T-cell (primary cell): ENCODE measurements at regions of chr5 and their contacts with region 1.

Region 1: GRCh38 chr5:134493461-134494055 is 31.9 kb upstream of the JADE2 start:
- DNase-seq: no peak
- ATAC-seq: peak in 1 of 4 experiments; percentile 49
- H3K4me3 ChIP-seq: no peak overlapping the region
- H3K4me3 Mint-ChIP-seq: no peak overlapping the region
- H3K27ac ChIP-seq: no peak overlapping the region
- H3K27ac Mint-ChIP-seq: no peak overlapping the region
- H3K4me1 ChIP-seq: no peaks in the 10 kb centered on the region
- H3K4me1 Mint-ChIP-seq: peaks cover 0 to 6% (median 0%) of the 10 kb centered on the region in 3 donors
- H3K27me3 ChIP-seq: peaks cover 0 to 3% of the 10 kb centered on the region in 2 experiments
- H3K27me3 Mint-ChIP-seq: no peaks in the 10 kb centered on the region

Region 2: DNA sequence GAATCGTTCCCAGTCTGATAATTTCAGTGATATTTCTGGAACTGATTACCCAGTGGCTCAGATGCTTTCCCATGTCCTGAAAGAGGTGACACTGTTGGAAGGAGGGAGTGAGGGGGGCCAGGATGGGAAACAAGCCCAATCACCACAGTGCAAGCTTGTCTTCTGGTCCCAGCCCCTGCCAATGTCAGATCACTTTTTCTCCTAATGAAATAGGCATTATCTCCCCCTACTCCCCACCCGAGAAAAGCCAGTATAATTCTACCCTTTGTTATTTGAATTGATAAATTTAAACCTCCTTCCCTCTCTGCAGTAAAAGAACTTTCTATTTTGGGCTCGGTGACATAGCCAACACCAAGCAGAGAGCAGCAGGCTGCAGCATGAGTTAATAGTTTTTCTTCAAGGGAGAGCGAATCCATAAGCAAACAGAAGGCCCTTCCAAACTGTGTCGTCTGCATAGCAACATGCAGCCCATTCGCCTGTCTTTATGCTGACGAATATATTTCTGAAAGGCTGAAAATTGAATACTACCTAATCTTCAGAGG is 253.1 kb before region 1 on chr5:
- CTCF ChIA-PET with region 1: no interaction called
- POLR2A ChIA-PET with region 1: no interaction called
- DNase-seq: no peak
- ATAC-seq: no peak
- H3K4me3 ChIP-seq: no peak overlapping the region
- H3K4me3 Mint-ChIP-seq: no peak overlapping the region
- H3K27ac ChIP-seq: no peak overlapping the region
- H3K27ac Mint-ChIP-seq: no peak overlapping the region
- H3K4me1 ChIP-seq: no peaks in the 10 kb centered on the region
- H3K4me1 Mint-ChIP-seq: no peaks in the 10 kb centered on the region
- H3K27me3 ChIP-seq: peaks cover 0 to 5% of the 10 kb centered on the region in 2 experiments
- H3K27me3 Mint-ChIP-seq: peaks cover 0 to 4% of the 10 kb centered on the region in 2 donors

Region 3: DNA sequence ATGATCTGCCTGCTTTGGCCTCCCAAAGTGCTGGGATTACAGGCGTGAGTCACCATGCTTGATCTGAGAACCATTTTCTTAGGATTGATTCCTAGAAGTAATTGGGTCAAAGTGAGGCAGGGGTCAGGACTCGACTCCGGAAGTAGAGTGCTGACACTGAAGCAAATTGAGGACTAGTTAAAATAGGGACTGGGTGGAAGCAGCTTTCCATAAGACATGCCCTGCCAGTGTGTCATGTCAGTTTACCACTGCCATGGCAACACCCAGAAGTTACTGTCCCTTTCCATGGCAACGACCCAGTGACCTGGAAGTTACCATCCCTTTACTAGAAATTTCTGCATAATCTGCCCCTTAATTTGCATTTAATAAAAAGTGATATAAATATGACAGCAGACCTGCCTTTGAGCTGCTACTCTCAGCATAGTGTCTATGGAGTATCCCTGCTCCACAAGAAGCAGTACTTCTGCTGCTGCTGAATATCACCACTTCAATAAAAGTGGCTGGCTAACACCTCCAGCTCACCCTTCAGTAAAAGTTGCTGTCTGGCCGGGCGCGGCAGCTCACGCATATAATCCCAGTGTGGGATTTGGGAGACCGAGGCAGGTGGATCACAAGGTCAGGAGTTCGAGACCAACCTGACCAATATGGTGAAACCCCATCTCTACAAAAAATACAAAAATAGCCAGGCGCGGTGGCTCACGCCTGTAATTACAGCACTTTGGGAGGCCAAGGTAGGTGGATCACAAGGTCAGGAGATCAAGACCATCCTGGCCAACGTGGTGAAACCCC is 15.9 kb before region 1 on chr5:
- CTCF ChIA-PET with region 1: interaction called in 1 of 2 experiments, 3 read pairs
- POLR2A ChIA-PET with region 1: interaction called in 1 of 2 experiments, 14 read pairs
- DNase-seq: no peak
- ATAC-seq: no peak
- H3K4me3 ChIP-seq: no peak overlapping the region
- H3K4me3 Mint-ChIP-seq: no peak overlapping the region
- H3K27ac ChIP-seq: no peak overlapping the region
- H3K27ac Mint-ChIP-seq: no peak overlapping the region
- H3K4me1 ChIP-seq: no peaks in the 10 kb centered on the region
- H3K4me1 Mint-ChIP-seq: no peaks in the 10 kb centered on the region
- H3K27me3 ChIP-seq: peaks cover 0 to 3% of the 10 kb centered on the region in 2 experiments
- H3K27me3 Mint-ChIP-seq: peaks cover 0 to 2% of the 10 kb centered on the region in 2 donors